Activated naive CD4-positive, alpha-beta T cell treated with anti-CD3 and anti-CD28 coated beads for 36 hours (primary cell): ENCODE measurements at regions of chr12 and their contacts with region 1.

Region 1: DNA sequence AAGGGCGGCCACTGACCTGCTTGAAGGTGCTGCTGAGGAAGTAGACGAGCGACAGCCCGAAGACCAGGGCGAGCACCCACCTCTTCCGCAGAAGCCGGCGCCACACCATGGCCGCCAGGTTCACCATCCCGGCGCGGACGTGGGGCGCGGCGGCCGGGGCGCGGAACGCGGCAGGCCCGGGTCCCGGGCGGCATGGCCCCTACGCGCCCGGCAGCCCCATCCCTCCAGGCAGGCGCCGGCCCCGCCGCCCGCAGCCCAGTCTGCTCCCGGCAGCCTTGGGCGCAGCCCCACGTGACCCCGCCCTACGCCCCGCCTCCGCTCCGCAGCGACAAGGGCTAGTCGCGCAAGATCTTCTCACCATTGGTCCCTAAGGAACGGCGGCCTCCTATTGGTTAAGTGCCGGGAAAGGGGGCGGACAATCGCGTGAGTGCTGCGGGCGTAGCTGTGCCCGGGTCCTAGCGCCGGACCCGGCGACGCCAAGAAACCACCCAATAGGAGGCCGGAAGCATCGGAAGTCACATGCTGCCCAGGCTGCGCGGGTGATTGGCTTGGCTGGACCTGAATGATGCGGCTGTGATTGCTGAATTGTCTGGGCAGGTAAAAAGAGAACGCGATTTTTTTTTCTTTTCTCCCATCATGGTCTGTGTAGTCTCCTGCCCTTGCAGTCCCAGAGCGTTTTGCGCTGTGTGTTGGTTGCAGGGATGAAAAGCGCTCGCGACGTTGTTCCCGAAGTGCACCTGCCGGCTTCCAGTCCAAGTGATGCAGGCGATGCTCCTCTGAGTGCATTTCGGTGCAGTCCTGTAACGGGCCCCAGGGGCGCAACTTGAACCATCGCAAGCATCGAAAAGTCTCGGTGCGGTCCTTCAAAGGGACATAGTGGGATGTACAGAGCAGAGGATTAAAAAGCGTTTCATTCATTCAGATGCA is at the starts of genes RNFT2 and SPRING1:
- DNase-seq: peak; percentile 99
- H3K4me3 Mint-ChIP-seq: peak within 1 kb of the TSS; percentile 96
- H3K27ac Mint-ChIP-seq: peak within 1 kb of the TSS; percentile 79
- H3K4me1 Mint-ChIP-seq: peaks cover 22% of the 10 kb centered on the region
- H3K27me3 Mint-ChIP-seq: no peaks in the 10 kb centered on the region
- total RNA-seq, gene RNFT2: 13.0 to 15.8 TPM
- total RNA-seq, gene SPRING1: 14.8 to 16.9 TPM

Region 2: GRCh38 chr12:116784238-116784612 is 46.2 kb after region 1 on chr12:
- CTCF ChIA-PET with region 1: no interaction called
- intact Hi-C with region 1: no loop called
- DNase-seq: no peak
- H3K4me3 Mint-ChIP-seq: no peak overlapping the region
- H3K27ac Mint-ChIP-seq: no peak overlapping the region
- H3K4me1 Mint-ChIP-seq: no peaks in the 10 kb centered on the region
- H3K27me3 Mint-ChIP-seq: no peaks in the 10 kb centered on the region

Region 3: GRCh38 chr12:116910645-116911451 is 172.8 kb after region 1 on chr12 and contains the start of gene FBXW8:
- CTCF ChIA-PET with region 1: no interaction called
- intact Hi-C with region 1: loop called (anchors 1 kb)
- DNase-seq: peak; percentile 62
- H3K4me3 Mint-ChIP-seq: peak within 1 kb of the TSS; percentile 92
- H3K27ac Mint-ChIP-seq: no peak within 1 kb of the TSS
- H3K4me1 Mint-ChIP-seq: peaks cover 19% of the 10 kb centered on the region
- H3K27me3 Mint-ChIP-seq: peaks cover 4% of the 10 kb centered on the region
- total RNA-seq, gene FBXW8: 6.4 to 6.5 TPM

Region 4: DNA sequence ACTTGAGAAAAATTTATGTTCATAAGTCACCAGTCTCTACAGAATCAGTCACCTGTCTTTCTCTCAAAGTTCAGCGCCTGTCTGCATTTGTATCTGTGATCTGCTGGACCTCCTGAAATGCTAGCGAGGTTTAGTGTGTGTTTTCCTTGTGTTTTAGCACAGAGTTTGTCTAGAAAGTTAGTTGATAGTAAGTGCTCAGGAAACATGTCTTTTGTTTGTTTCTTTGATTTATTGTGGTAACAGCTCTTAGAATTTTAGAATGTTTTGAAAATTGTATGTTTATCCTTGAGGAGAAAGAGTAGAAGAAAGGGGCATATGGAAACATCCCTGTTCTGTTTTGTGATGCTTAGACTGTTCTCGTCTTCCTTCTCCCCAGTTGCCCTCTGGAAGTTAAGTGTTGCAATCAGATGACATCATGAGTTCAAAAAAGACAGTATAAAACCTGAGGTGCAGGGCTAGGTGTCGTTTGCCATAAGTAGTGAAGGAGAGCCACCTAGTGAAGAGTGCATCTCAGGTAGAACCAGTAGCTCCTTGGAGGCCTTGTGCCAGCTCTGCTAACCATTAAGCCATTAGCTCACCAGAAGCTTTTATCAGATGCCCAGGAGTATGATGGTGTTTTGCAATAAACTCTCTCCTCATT is 217.5 kb after region 1 on chr12:
- CTCF ChIA-PET with region 1: no interaction called
- intact Hi-C with region 1: loop called (anchors 5 kb)
- DNase-seq: peak; percentile 14
- H3K4me3 Mint-ChIP-seq: no peak overlapping the region
- H3K27ac Mint-ChIP-seq: no peak overlapping the region
- H3K4me1 Mint-ChIP-seq: peaks cover 14% of the 10 kb centered on the region
- H3K27me3 Mint-ChIP-seq: no peaks in the 10 kb centered on the region

Region 5: DNA sequence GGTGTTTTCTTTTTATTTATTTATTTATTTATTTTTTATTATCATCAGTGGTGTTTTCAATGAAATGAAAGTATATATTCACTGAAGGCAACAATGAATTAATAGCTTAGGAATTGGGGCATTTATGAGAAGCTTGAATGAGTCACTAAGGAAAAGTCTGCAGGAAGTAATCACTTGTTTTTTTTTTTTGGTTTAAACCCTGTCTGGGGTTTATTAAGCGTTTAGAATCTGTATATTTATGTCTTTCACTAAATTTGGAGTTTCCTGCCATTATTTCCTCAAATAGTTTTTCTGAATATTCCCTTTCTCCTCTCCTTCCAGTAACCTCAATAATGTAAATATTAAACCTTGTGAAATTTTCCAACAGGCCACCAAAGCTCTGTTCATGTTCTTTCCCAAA is 275.7 kb after region 1 on chr12:
- CTCF ChIA-PET with region 1: no interaction called
- intact Hi-C with region 1: no loop called
- DNase-seq: no peak
- H3K4me3 Mint-ChIP-seq: no peak overlapping the region
- H3K27ac Mint-ChIP-seq: no peak overlapping the region
- H3K4me1 Mint-ChIP-seq: no peaks in the 10 kb centered on the region
- H3K27me3 Mint-ChIP-seq: no peaks in the 10 kb centered on the region

Region 6: GRCh38 chr12:117190210-117190781 is 452.3 kb after region 1 on chr12 and contains the start of gene FBXO21:
- CTCF ChIA-PET with region 1: no interaction called
- intact Hi-C with region 1: loop called (anchors 1 kb)
- DNase-seq: peak; percentile 91
- H3K4me3 Mint-ChIP-seq: peak within 1 kb of the TSS; percentile 90
- H3K27ac Mint-ChIP-seq: peak within 1 kb of the TSS; percentile 83
- H3K4me1 Mint-ChIP-seq: peaks cover 23% of the 10 kb centered on the region
- H3K27me3 Mint-ChIP-seq: no peaks in the 10 kb centered on the region
- total RNA-seq, gene FBXO21: 18.2 to 19.7 TPM